Activated CD8-positive, alpha-beta T cell treated with anti-CD3 and anti-CD28 coated beads for 36 hours (primary cell): ENCODE measurements at regions of chr17 and their contacts with region 1.

Region 1: DNA sequence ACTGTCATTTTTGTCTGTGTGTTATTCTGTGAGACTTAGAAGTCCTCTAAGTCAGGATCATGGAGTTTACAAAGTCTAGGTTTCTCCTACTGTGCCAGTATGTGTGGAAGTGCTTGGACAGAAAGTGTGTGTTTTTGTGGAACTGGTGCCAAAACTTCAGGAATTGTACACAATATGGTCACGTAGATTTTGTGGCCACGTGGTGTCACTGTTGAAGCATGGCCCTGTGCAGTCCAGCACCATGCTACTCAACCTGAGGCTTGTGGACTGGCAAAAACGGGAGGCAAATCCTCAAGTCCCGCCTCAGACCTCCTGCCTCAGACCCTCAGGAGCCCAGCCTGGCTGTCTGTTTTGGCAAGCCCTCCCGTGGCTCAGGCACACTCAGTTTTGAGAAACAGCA is 16.7 kb upstream of the ALKBH5 start:
- DNase-seq: no peak
- ATAC-seq: no peak
- H3K4me3 Mint-ChIP-seq: no peak overlapping the region
- H3K27ac Mint-ChIP-seq: no peak overlapping the region
- H3K4me1 Mint-ChIP-seq: no peaks in the 10 kb centered on the region
- H3K27me3 Mint-ChIP-seq: no peaks in the 10 kb centered on the region
- CTCF ChIP-seq: no peak

Region 2: DNA sequence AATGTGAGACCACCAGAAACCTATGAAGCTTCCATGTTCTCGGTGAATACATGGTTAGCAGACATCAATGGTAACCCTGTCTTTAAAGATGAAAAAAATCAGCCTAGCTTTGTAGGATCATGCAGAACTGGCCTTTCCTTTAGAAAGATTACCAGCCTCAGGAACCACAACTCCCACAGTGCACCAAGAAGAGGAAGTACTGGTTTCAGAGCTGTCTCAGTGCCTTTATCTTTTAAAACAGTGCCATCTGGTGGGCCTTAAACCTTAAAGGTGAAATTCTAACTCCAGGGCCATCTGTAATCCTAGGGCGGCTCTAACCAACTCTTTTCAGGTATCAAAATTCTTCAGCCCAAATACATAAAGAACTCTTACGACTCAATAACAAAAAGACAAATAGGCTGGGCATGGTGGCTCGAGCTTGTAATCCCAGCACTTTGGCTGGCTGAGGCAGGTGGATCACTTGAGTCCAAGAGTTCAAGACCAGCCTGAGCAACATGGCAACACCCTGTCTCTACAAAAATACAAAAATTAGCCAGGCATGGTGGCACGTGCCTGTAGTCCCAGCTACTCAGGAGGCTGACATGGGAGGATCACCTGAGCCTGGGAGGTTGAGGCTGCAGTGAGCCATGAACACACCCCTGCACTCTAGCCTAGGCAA is 133.3 kb before region 1 on chr17:
- CTCF ChIA-PET with region 1: no interaction called
- POLR2A ChIA-PET with region 1: no interaction called
- intact Hi-C with region 1: no loop called
- DNase-seq: peak; percentile 76
- ATAC-seq: peak; percentile 72
- H3K4me3 Mint-ChIP-seq: no peak overlapping the region
- H3K27ac Mint-ChIP-seq: no peak overlapping the region
- H3K4me1 Mint-ChIP-seq: peaks cover 34% of the 10 kb centered on the region
- H3K27me3 Mint-ChIP-seq: no peaks in the 10 kb centered on the region
- CTCF ChIP-seq: peak; percentile 80

Region 3: DNA sequence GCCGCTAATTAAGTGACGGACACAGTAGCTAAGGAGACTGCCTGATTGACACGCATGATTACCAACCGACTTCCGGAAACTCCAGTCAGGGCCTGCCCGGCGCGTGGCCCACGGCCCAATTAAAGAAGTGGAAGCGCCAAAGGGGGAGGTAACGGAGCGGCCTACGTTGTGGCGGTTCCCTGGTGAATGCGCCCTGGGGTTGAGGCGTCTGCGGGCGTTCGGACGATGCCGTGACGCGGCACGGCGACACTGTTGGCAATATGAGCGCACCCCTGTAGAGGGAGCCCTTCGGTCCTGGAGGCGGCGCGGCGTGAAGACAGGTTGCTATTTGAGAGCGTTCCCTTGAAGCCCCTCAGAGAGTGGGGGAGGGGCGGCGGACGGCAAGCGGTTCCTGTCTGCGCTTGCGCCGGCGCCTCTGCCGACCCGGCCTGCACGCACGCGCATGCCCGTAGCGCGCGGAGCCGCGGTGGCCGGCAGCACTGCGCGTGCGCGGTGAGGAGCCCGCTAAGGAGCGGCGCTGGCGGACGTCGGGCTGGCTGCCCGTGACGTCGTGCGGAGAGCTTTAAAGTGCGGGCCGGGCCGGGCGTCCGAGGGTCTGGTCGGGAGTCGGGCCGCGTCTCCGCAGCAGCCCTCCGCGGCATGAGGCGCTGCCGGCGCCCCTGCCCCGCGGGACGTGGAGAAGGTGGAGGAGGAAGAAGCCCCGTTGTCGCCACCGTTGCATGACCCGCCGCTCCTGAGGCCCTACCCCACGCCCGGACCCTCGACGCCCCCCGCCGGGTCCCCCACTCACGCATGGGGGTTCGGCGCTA is 16.6 kb after region 1 on chr17 and contains the start of gene ALKBH5:
- CTCF ChIA-PET with region 1: interaction called, 6 read pairs
- POLR2A ChIA-PET with region 1: interaction called, 18 read pairs
- intact Hi-C with region 1: no loop called
- DNase-seq: peak; percentile 98
- ATAC-seq: peak; percentile 86
- H3K4me3 Mint-ChIP-seq: peak within 1 kb of the TSS; percentile 96
- H3K27ac Mint-ChIP-seq: peak within 1 kb of the TSS; percentile 98
- H3K4me1 Mint-ChIP-seq: peaks cover 49% of the 10 kb centered on the region
- H3K27me3 Mint-ChIP-seq: no peaks in the 10 kb centered on the region
- CTCF ChIP-seq: peak; percentile 57
- total RNA-seq, gene ALKBH5: 213 to 217 TPM